Activated CD8-positive, alpha-beta T cell treated with anti-CD3 and anti-CD28 coated beads for 36 hours (primary cell): ENCODE measurements at regions of chr5 and their contacts with region 1.

Region 1: GRCh38 chr5:78076351-78076750 is 218.1 kb downstream of the AP3B1 start:
- DNase-seq: no peak
- ATAC-seq: no peak
- H3K4me3 Mint-ChIP-seq: no peak overlapping the region
- H3K27ac Mint-ChIP-seq: no peak overlapping the region
- H3K4me1 Mint-ChIP-seq: no peaks in the 10 kb centered on the region
- H3K27me3 Mint-ChIP-seq: no peaks in the 10 kb centered on the region
- CTCF ChIP-seq: no peak

Region 2: DNA sequence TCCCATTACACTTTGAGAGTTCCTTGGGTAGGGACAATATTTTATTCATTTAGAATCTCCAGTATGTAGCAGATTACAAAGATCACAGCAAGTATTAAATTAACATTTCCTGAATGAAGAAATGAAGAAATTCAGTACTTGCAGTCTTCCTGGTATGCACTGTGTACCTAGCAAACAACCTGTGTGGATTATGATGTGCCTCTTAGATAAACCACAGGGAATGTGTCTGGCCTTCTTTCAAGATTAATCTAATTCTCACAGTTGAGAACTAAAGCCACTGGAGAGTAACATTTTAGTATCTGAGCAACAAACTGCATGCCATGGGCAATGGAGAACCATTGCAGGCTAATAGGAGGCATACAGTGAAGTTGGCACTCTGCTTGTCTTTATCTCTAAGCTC is 18.8 kb after region 1 on chr5:
- CTCF ChIA-PET with region 1: no interaction called
- POLR2A ChIA-PET with region 1: no interaction called
- intact Hi-C with region 1: no loop called
- DNase-seq: no peak
- ATAC-seq: no peak
- H3K4me3 Mint-ChIP-seq: no peak overlapping the region
- H3K27ac Mint-ChIP-seq: no peak overlapping the region
- H3K4me1 Mint-ChIP-seq: no peaks in the 10 kb centered on the region
- H3K27me3 Mint-ChIP-seq: no peaks in the 10 kb centered on the region
- CTCF ChIP-seq: no peak

Region 3: GRCh38 chr5:78190402-78190801 is 114.1 kb after region 1 on chr5:
- CTCF ChIA-PET with region 1: no interaction called
- POLR2A ChIA-PET with region 1: no interaction called
- intact Hi-C with region 1: loop called (anchors 10 kb)
- DNase-seq: no peak
- ATAC-seq: no peak
- H3K4me3 Mint-ChIP-seq: no peak overlapping the region
- H3K27ac Mint-ChIP-seq: no peak overlapping the region
- H3K4me1 Mint-ChIP-seq: no peaks in the 10 kb centered on the region
- H3K27me3 Mint-ChIP-seq: no peaks in the 10 kb centered on the region
- CTCF ChIP-seq: no peak